Activated CD4-positive, alpha-beta memory T cell treated with anti-CD3 and anti-CD28 coated beads for 36 hours (primary cell): ENCODE measurements at regions of chr1 and their contacts with region 1.

Region 1: DNA sequence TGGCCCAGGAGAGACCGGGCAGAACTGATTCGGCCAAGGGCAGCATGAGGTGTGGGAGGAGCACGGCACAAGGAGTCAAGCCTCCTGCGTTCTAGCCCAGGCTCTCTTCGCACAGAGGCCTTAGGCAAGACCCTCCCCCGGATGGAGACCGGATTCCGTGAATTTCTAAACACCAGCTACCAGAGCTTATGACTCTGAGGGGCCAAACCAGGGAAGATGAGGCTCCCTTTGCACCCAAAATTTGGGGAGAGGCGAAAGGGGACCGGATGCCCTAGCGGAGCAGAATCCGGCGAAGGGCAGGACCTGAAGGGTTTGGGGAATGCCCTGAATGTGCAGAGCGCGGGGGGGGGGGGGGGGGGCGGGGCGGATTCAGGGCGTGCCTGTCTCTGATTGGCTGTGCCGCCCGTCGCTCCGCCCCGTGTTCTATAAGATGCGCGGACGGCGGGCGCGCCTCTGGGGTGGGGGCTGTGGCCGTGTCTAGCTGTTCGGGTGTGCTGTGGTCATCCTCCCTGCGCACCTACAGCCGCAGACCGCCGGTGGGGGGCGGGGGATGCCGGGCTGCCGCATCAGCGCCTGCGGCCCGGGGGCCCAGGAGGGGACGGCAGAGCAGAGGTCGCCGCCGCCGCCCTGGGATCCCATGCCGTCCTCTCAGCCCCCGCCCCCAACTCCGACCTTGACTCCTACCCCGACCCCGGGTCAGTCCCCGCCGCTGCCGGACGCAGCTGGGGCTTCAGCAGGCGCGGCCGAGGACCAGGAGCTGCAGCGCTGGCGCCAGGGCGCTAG is at the start of gene TRNP1:
- DNase-seq: peak; percentile 75
- H3K4me3 Mint-ChIP-seq: peak within 1 kb of the TSS; percentile 68
- H3K27ac Mint-ChIP-seq: no peak within 1 kb of the TSS
- H3K4me1 Mint-ChIP-seq: peaks cover 20% of the 10 kb centered on the region
- H3K27me3 Mint-ChIP-seq: peaks cover 44% of the 10 kb centered on the region
- total RNA-seq, gene TRNP1: 0.19 to 0.53 TPM

Region 2: GRCh38 chr1:26961826-26962225 is 31.6 kb before region 1 on chr1:
- CTCF ChIA-PET with region 1: interaction called, 14 read pairs
- POLR2A ChIA-PET with region 1: no interaction called
- intact Hi-C with region 1: no loop called
- DNase-seq: no peak
- H3K4me3 Mint-ChIP-seq: no peak overlapping the region
- H3K27ac Mint-ChIP-seq: no peak overlapping the region
- H3K4me1 Mint-ChIP-seq: peaks cover 4% of the 10 kb centered on the region
- H3K27me3 Mint-ChIP-seq: peaks cover 23% of the 10 kb centered on the region